Mammary epithelial cell (primary cell): ENCODE measurements at regions of chr22 and their contacts with region 1.

Region 1: GRCh38 chr22:43090130-43090789 is 1.1 kb upstream of the TTLL1 start:
- DNase-seq: peak; percentile 89
- H3K4me3 ChIP-seq: no peak overlapping the region
- H3K27ac ChIP-seq: no peak overlapping the region
- H3K4me1 ChIP-seq: peaks cover 15% of the 10 kb centered on the region
- H3K27me3 ChIP-seq: no peaks in the 10 kb centered on the region
- CTCF ChIP-seq: peak; percentile 45 to 69

Region 2: GRCh38 chr22:42621505-42622002 is 468.7 kb before region 1 on chr22:
- CTCF ChIA-PET with region 1: interaction called, 3 read pairs
- dilution Hi-C with region 1: no loop called
- in situ Hi-C with region 1: no loop called
- intact Hi-C with region 1: loop called (anchors 1 kb)
- DNase-seq: peak; percentile 55
- H3K4me3 ChIP-seq: no peak overlapping the region
- H3K27ac ChIP-seq: peak overlapping the region; percentile 53
- H3K4me1 ChIP-seq: peaks cover 24% of the 10 kb centered on the region
- H3K27me3 ChIP-seq: no peaks in the 10 kb centered on the region
- CTCF ChIP-seq: peak; percentile 90 to 96

Region 3: DNA sequence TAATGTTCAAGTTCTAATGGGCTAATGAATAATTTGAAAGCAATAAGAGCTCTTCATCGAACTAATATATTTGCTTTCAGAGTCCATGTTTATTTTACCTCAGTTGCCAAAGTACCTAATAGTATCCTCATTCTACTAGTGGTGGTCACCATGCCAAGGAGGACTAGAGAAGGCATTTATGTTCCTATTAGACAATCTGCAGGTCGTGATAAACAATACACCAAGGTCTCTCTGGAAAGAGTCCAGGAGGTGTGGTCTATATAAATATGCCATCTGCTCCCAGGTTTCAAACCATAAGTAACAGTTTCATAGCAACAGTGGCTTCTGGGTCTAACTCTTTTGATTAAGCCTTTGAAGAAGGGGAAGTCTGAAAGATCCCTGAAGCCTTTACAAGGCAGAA is 276.0 kb before region 1 on chr22:
- CTCF ChIA-PET with region 1: no interaction called
- dilution Hi-C with region 1: no loop called
- in situ Hi-C with region 1: no loop called
- intact Hi-C with region 1: no loop called
- DNase-seq: no peak
- H3K4me3 ChIP-seq: no peak overlapping the region
- H3K27ac ChIP-seq: no peak overlapping the region
- H3K4me1 ChIP-seq: peaks cover 7% of the 10 kb centered on the region
- H3K27me3 ChIP-seq: no peaks in the 10 kb centered on the region
- CTCF ChIP-seq: no peak

Region 4: GRCh38 chr22:42868751-42869251 is 221.5 kb before region 1 on chr22:
- CTCF ChIA-PET with region 1: interaction called, 11 read pairs
- dilution Hi-C with region 1: no loop called
- in situ Hi-C with region 1: no loop called
- intact Hi-C with region 1: loop called (anchors 5 kb)
- DNase-seq: no peak
- H3K4me3 ChIP-seq: no peak overlapping the region
- H3K27ac ChIP-seq: no peak overlapping the region
- H3K4me1 ChIP-seq: peaks cover 4% of the 10 kb centered on the region
- H3K27me3 ChIP-seq: no peaks in the 10 kb centered on the region
- CTCF ChIP-seq: no peak

Region 5: DNA sequence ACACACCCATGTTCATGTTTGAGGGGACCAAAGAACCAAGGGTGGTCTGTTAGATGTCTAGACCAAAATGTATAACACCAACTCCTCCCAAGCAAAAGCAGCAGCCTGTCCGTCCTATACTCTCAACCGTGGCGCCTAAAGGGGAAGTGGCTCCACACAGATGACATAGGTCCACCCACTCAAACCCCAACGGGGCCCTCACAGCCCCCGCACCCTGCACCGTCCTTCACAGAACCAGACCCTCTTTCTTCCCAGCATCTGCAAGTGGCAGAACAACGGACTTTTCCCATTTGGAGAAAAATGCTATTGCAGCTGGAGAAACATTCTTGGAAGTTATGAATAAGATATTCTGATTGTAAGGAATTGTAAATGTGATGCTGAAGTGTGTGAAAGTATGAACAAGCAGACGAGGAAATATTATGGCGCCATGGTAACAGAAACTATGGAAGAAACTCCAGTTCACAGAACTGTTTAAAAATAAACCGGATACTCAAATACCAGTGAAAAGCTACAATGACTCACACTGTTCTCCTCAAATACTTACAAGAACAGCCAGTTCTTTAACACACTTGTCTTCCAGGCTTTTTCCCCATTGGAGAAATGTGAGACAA is 156.7 kb before region 1 on chr22:
- CTCF ChIA-PET with region 1: no interaction called
- dilution Hi-C with region 1: no loop called
- in situ Hi-C with region 1: no loop called
- intact Hi-C with region 1: loop called (anchors 5 kb)
- DNase-seq: peak; percentile 90
- H3K4me3 ChIP-seq: peak overlapping the region in 2 of 3 experiments; percentile 22 to 25
- H3K27ac ChIP-seq: peak overlapping the region; percentile 98
- H3K4me1 ChIP-seq: peaks cover 66% of the 10 kb centered on the region
- H3K27me3 ChIP-seq: no peaks in the 10 kb centered on the region
- CTCF ChIP-seq: no peak

Region 6: GRCh38 chr22:42990139-42990767 is 100.0 kb before region 1 on chr22:
- CTCF ChIA-PET with region 1: interaction called, 8 read pairs
- dilution Hi-C with region 1: no loop called
- in situ Hi-C with region 1: no loop called
- intact Hi-C with region 1: loop called (anchors 1 kb)
- DNase-seq: peak; percentile 88
- H3K4me3 ChIP-seq: no peak overlapping the region
- H3K27ac ChIP-seq: no peak overlapping the region
- H3K4me1 ChIP-seq: peaks cover 46% of the 10 kb centered on the region
- H3K27me3 ChIP-seq: no peaks in the 10 kb centered on the region
- CTCF ChIP-seq: peak; percentile 41 to 69

Region 7: DNA sequence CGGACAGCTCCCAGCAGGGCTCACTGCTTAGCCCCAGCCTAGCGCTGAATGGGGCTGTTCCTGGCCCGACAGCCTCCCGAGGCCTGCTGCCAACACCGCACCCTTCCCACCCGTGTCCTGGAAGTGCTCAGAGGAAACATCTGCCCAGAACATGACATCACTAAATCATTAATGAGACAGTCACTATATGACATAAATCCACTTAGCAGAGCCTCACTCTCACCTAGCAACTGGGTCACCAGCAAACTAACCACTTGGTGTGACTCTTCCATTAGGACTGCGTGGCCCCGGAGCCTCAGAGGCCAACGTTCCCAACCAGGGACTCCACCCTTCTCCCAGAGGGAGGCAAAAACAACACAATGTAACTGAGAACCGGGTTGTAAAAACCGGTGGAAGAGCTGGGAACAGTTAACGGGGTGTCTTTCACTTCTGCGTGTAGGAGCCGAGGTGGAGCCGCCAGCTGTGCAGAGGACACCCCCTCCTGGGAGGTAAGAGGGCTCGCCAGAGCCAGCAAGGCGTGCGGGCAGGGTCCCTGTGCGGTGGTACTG is 53.9 kb before region 1 on chr22:
- CTCF ChIA-PET with region 1: no interaction called
- dilution Hi-C with region 1: no loop called
- in situ Hi-C with region 1: no loop called
- intact Hi-C with region 1: loop called (anchors 1 kb)
- DNase-seq: no peak
- H3K4me3 ChIP-seq: no peak overlapping the region
- H3K27ac ChIP-seq: no peak overlapping the region
- H3K4me1 ChIP-seq: no peaks in the 10 kb centered on the region
- H3K27me3 ChIP-seq: no peaks in the 10 kb centered on the region
- CTCF ChIP-seq: no peak